Colonic mucosa (tissue), 4 donors: ENCODE measurements at regions of chr11 and their contacts with region 1.

Region 1: GRCh38 chr11:69642913-69643632 is 2.1 kb downstream of the CCND1 start:
- DNase-seq: peak; percentile 79
- H3K4me3 ChIP-seq: peak overlapping the region; percentile 86
- H3K27ac ChIP-seq: peak overlapping the region; percentile 73
- H3K4me1 ChIP-seq: peaks cover 29% of the 10 kb centered on the region
- H3K27me3 ChIP-seq: peaks cover 17% of the 10 kb centered on the region
- CTCF ChIP-seq: peak; percentile 94

Region 2: GRCh38 chr11:69101115-69101791 is 541.8 kb before region 1 on chr11:
- intact Hi-C with region 1: loop called (anchors 2 kb)
- DNase-seq: peak; percentile 77
- H3K4me3 ChIP-seq: no peak overlapping the region
- H3K27ac ChIP-seq: no peak overlapping the region
- H3K4me1 ChIP-seq: no peaks in the 10 kb centered on the region
- H3K27me3 ChIP-seq: no peaks in the 10 kb centered on the region
- CTCF ChIP-seq: peak; percentile 100

Region 3: DNA sequence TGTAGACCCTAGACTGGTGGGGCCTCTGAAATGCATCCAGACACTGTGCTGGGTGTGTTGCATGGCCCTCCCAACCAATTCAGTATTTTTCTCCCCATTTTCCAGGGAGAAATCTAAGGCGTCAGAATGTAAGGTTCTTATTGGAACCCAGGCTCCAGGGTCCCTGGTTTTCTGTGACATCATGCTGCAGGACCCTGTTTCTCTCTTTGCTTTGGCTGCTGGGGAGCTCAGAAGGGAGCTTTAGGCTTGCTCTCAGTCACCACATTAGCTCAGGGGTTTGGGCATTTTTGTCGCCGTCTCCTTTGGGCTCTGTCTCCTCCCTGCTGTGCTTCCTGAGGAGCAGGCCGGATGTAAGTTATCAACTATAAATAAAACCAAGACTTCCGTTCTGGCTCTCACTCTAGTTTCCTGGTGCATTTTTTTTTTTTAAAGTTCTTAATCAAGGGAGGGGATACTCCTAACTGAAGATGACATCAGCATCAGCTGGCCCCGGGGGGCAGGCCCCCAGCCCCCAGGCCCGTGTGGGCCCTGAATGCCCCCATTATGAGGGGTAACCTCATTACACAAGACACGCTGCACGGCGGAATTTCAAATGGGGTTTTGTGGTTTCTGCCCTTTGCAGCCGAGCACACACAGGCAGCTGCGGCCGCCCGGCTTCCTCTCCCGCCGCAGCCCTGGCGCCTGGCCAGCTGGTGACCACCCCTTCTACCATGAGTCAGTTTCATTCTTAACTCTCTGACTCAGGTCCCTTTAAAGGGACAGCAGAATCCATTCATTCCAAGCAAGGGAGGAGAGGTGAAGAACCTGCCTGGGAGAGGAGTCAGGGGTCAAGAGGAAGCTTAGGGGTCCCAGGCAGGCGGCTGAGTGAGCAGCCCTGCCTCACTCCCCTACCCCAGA is 345.9 kb before region 1 on chr11:
- intact Hi-C with region 1: loop called (anchors 5 kb)
- DNase-seq: peak; percentile 93
- H3K4me3 ChIP-seq: no peak overlapping the region
- H3K27ac ChIP-seq: peak overlapping the region; percentile 92
- H3K4me1 ChIP-seq: peaks cover 36% of the 10 kb centered on the region
- H3K27me3 ChIP-seq: no peaks in the 10 kb centered on the region
- CTCF ChIP-seq: no peak

Region 4: GRCh38 chr11:69443138-69443967 is 199.7 kb before region 1 on chr11:
- intact Hi-C with region 1: loop called (anchors 5 kb)
- DNase-seq: peak; percentile 94
- H3K4me3 ChIP-seq: peak overlapping the region; percentile 20
- H3K27ac ChIP-seq: peak overlapping the region; percentile 52
- H3K4me1 ChIP-seq: peaks cover 12% of the 10 kb centered on the region
- H3K27me3 ChIP-seq: no peaks in the 10 kb centered on the region
- CTCF ChIP-seq: no peak

Region 5: DNA sequence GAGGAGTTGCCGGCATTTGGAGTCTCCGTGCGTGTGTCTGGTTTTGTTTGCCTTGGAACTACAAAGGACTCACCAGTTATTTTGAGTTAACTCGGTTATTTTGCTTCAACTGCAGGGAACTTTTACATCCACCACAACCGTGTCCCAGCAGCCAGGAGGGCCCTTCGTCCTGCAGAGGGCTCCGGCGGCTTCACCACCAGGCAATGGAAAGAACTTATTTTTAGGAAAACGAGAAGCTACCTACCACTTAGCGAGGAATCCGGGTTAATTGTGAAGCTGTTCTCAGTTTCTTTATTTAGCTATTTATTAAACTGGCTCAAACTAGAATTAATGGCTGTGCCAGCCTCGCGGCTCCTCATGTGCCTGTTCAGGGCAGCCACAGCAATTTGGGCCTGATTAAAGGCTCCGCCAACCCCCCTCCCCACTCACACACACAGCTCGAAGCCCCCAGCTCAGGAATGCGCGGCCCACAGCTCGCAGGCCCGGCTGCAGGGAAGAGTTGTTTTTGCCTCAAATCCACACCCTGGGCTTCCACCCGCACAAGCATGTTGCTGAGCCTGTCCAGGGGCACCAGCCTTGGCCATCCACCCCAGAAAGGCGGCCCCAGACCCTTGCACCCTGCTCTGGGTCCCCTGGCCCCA is 232.0 kb after region 1 on chr11:
- intact Hi-C with region 1: no loop called
- DNase-seq: no peak
- H3K4me3 ChIP-seq: no peak overlapping the region
- H3K27ac ChIP-seq: no peak overlapping the region
- H3K4me1 ChIP-seq: no peaks in the 10 kb centered on the region
- H3K27me3 ChIP-seq: no peaks in the 10 kb centered on the region
- CTCF ChIP-seq: no peak

Region 6: DNA sequence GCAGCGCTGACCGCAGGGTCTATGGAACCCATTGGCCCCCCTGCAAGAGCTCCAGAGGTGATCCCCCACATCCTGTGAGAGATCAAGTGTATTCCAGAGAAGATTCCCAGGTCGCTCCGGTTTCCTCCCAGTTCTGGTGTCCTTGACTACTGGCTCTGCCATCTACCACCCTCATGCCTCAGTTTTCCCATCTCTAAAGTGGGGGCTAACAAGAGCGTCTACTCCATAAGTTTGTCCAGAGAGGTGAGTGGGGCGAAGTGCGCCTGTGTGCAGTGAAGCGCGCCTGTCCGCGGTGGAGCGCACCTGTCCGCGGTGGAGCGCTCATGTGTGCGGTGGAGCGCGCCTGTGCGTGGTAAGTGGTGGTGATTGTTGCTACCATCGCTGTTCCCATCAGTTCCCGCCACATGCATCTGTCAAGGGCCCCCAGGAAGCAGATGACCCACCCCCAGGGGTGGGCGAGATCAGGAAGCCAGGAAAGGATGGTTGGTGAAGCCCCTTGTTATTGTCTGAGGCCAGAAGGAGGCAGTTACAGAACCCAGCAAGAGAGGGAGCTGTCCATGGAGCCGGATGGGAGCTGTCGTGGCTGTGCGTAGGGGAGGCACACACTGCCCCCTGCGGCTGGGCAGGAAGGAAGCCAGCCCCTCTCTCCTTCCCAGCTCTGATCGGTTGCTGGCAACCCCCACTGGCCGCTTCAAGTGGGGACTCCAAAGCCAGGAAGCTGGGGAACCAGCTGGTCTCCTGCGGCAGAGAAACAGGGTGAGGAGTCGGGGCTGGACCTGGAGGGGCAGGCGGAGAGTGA is 249.4 kb after region 1 on chr11:
- intact Hi-C with region 1: no loop called
- DNase-seq: no peak
- H3K4me3 ChIP-seq: no peak overlapping the region
- H3K27ac ChIP-seq: no peak overlapping the region
- H3K4me1 ChIP-seq: peaks cover 11% of the 10 kb centered on the region
- H3K27me3 ChIP-seq: no peaks in the 10 kb centered on the region
- CTCF ChIP-seq: no peak